Esophagus muscularis mucosa (tissue), 4 donors: ENCODE measurements at regions of chr13 and their contacts with region 1.

Region 1: GRCh38 chr13:43510956-43511901 is 275.5 kb downstream of the ENOX1 start:
- DNase-seq: no peak
- H3K4me3 ChIP-seq: no peak overlapping the region
- H3K27ac ChIP-seq: peak overlapping the region; percentile 75 to 78 (median 78)
- H3K4me1 ChIP-seq: peaks cover 14 to 49% (median 40%) of the 10 kb centered on the region in 4 donors
- H3K27me3 ChIP-seq: no peaks in the 10 kb centered on the region
- CTCF ChIP-seq: no peak
- EP300 ChIP-seq: no peak
- POLR2A ChIP-seq: no peak

Region 2: DNA sequence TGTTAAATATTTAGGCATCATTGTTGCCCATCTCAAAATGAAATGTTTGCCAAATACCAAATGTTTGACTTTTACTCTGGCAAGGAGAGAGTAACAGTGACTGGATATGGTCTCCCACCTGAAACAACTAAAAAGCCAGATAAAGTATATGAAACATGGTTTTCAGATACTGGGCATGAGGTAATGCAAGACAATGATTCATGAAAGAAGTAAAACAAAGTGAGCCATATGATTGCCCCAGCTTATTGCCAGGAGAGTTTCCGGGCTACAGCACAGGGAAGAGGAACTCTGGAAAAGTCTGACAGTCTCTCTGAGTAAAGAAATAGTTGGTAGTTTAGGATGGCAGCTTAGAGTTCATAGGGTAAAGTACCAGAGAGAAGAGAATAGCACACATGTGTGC is 133.3 kb before region 1 on chr13:
- intact Hi-C with region 1: no loop called
- DNase-seq: no peak
- H3K4me3 ChIP-seq: no peak overlapping the region
- H3K27ac ChIP-seq: no peak overlapping the region
- H3K4me1 ChIP-seq: peaks cover 8 to 47% (median 28%) of the 10 kb centered on the region in 4 donors
- H3K27me3 ChIP-seq: no peaks in the 10 kb centered on the region
- CTCF ChIP-seq: no peak
- EP300 ChIP-seq: no peak
- POLR2A ChIP-seq: no peak

Region 3: DNA sequence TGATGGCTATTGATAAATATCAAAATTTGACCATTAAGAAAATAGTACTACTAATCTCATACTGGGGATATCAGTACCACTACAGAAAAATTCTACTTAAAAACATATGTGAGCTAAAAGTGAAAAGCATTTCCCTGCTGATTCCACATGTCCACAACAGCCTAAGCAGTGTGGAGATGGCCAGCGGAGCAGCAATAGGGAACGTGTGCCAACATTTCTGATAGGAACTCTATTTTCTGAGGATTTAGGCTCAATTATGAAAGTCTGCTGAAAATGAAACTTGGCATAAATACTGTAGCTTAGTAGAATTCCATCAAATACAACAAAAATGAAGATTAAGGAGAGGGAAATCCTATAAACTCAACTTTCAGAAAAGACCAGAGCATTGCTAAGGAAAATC is 36.1 kb before region 1 on chr13:
- intact Hi-C with region 1: loop called (anchors 5 kb)
- DNase-seq: no peak
- H3K4me3 ChIP-seq: no peak overlapping the region
- H3K27ac ChIP-seq: peak overlapping the region in 2 of 4 donors; percentile 12 to 43
- H3K4me1 ChIP-seq: peaks cover 20 to 56% (median 45%) of the 10 kb centered on the region in 4 donors
- H3K27me3 ChIP-seq: no peaks in the 10 kb centered on the region
- CTCF ChIP-seq: no peak
- EP300 ChIP-seq: no peak
- POLR2A ChIP-seq: no peak